MCF 10A (cell line): ENCODE measurements at regions of chr15 and their contacts with region 1.

Region 1: GRCh38 chr15:65610871-65611718 is at the start of gene INTS14:
- DNase-seq: peak; percentile 96
- H3K4me3 Mint-ChIP-seq: peak within 1 kb of the TSS; percentile 89
- H3K27ac Mint-ChIP-seq: peak within 1 kb of the TSS; percentile 96
- H3K4me1 Mint-ChIP-seq: peaks cover 15% of the 10 kb centered on the region
- H3K27me3 Mint-ChIP-seq: no peaks in the 10 kb centered on the region
- CTCF ChIP-seq: peak; percentile 39
- total RNA-seq, gene INTS14: 43.9 and 47.0 TPM in 2 replicates

Region 2: GRCh38 chr15:65177901-65178300 is 433.2 kb before region 1 on chr15:
- CTCF ChIA-PET with region 1: no interaction called
- POLR2A ChIA-PET with region 1: no interaction called
- intact Hi-C with region 1: no loop called
- DNase-seq: peak; percentile 31
- H3K4me3 Mint-ChIP-seq: no peak overlapping the region
- H3K27ac Mint-ChIP-seq: no peak overlapping the region
- H3K4me1 Mint-ChIP-seq: peaks cover 5% of the 10 kb centered on the region
- H3K27me3 Mint-ChIP-seq: no peaks in the 10 kb centered on the region
- CTCF ChIP-seq: no peak

Region 3: GRCh38 chr15:65516997-65517865 is 93.9 kb before region 1 on chr15 and contains the start of gene DPP8:
- CTCF ChIA-PET with region 1: no interaction called
- POLR2A ChIA-PET with region 1: interaction called, 17 read pairs
- intact Hi-C with region 1: no loop called
- DNase-seq: peak; percentile 91
- H3K4me3 Mint-ChIP-seq: peak within 1 kb of the TSS; percentile 98
- H3K27ac Mint-ChIP-seq: peak within 1 kb of the TSS; percentile 95
- H3K4me1 Mint-ChIP-seq: peaks cover 14% of the 10 kb centered on the region
- H3K27me3 Mint-ChIP-seq: no peaks in the 10 kb centered on the region
- CTCF ChIP-seq: peak; percentile 84
- total RNA-seq, gene DPP8: 24.5 and 27.5 TPM in 2 replicates

Region 4: GRCh38 chr15:65530314-65531122 is 80.6 kb before region 1 on chr15 and contains the start of gene HACD3:
- CTCF ChIA-PET with region 1: no interaction called
- POLR2A ChIA-PET with region 1: interaction called, 10 read pairs
- intact Hi-C with region 1: no loop called
- DNase-seq: peak; percentile 81
- H3K4me3 Mint-ChIP-seq: peak within 1 kb of the TSS; percentile 73
- H3K27ac Mint-ChIP-seq: no peak within 1 kb of the TSS
- H3K4me1 Mint-ChIP-seq: peaks cover 31% of the 10 kb centered on the region
- H3K27me3 Mint-ChIP-seq: no peaks in the 10 kb centered on the region
- CTCF ChIP-seq: no peak
- total RNA-seq, gene HACD3: 26.8 and 31.4 TPM in 2 replicates

Region 5: DNA sequence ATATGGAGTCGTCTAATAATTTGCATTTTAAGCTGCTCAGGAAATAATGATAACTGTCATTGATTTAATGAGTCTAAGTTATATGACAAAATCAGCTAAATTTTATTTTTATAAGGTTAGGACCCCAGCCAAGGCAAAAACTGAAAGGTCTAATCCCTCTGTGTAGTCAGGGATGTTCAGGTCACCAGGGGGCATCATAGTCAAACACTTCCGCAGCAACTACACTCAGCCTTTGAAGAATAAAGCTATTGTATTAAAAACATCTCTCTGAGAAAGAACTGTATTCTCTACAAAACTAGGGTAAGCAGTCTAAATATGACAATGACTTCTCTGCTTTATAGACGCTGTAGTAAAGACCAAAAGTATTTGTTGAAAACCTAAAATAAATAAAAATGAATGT is 15.1 kb before region 1 on chr15:
- CTCF ChIA-PET with region 1: interaction called, 3 read pairs
- POLR2A ChIA-PET with region 1: interaction called, 20 read pairs
- intact Hi-C with region 1: no loop called
- DNase-seq: no peak
- H3K4me3 Mint-ChIP-seq: no peak overlapping the region
- H3K27ac Mint-ChIP-seq: no peak overlapping the region
- H3K4me1 Mint-ChIP-seq: no peaks in the 10 kb centered on the region
- H3K27me3 Mint-ChIP-seq: no peaks in the 10 kb centered on the region
- CTCF ChIP-seq: no peak

Region 6: DNA sequence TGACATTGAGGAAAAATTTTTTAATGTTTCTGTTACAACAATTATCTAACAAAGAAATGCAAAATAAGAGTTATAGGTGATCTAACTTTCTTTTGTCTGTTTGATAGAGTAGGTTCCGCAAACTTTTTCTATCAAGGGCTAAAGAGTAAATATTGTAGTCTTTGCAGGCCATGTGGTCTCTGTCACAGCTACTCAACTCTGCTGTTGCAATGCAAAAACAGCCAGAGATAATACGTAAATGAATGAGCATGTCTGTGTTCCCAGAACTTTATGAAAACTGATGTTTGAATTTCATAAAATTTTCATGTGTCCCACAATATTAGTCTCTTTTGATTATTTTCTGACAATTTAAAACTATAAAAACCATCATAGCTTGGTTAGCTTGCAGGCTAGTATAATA is 84.0 kb after region 1 on chr15:
- CTCF ChIA-PET with region 1: no interaction called
- POLR2A ChIA-PET with region 1: no interaction called
- intact Hi-C with region 1: no loop called
- DNase-seq: no peak
- H3K4me3 Mint-ChIP-seq: no peak overlapping the region
- H3K27ac Mint-ChIP-seq: no peak overlapping the region
- H3K4me1 Mint-ChIP-seq: no peaks in the 10 kb centered on the region
- H3K27me3 Mint-ChIP-seq: no peaks in the 10 kb centered on the region
- CTCF ChIP-seq: no peak

Region 7: DNA sequence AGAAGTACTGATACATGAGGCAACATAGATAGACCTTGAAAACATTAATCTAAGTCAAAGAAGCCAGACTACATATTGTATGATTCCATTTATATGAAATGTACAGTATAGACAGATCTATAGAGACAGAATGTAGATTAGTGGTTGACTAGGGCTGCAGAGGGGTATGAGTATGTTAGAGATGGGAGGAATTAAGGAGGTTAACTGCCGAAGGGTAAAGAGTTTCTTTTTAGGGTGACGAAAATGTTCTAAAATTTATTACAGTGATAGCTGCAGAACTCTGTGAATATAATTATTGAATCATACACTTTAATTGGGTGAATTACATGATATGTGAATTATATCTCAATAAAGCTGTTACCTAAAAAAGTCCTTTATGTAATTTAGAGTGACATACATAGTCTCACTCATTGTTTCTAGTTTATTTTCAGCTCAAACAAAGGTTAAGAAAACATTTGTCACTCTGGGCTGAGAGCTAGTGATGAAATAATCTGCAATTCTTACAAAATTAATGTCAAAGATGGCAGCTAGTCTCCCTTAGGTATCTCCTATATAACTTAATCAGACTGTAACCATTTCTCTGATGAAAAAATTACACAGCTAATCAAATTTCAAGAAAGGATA is 119.6 kb after region 1 on chr15:
- CTCF ChIA-PET with region 1: no interaction called
- POLR2A ChIA-PET with region 1: interaction called, 10 read pairs
- intact Hi-C with region 1: no loop called
- DNase-seq: peak; percentile 66
- H3K4me3 Mint-ChIP-seq: peak overlapping the region; percentile 38
- H3K27ac Mint-ChIP-seq: peak overlapping the region; percentile 84
- H3K4me1 Mint-ChIP-seq: peaks cover 17% of the 10 kb centered on the region
- H3K27me3 Mint-ChIP-seq: no peaks in the 10 kb centered on the region
- CTCF ChIP-seq: no peak